HepG2 (cell line): ENCODE measurements at regions of chr7 and their contacts with region 1.

Region 1: GRCh38 chr7:100586266-100587025 is at the start of gene FBXO24:
- DNase-seq: peak; percentile 99
- ATAC-seq: peak; percentile 91
- H3K4me3 ChIP-seq: peak within 1 kb of the TSS; percentile 80 to 98 (median 86)
- H3K27ac ChIP-seq: peak within 1 kb of the TSS; percentile 81
- H3K4me1 ChIP-seq: peaks cover 56% of the 10 kb centered on the region
- H3K27me3 ChIP-seq: peaks cover 0 to 7% of the 10 kb centered on the region in 2 experiments; a peak in 3 of 5 replicates
- CTCF ChIP-seq: no peak
- EP300 ChIP-seq: no peak
- POLR2A ChIP-seq: peak in 1 of 2 experiments; percentile 80; a peak in 2 of 4 replicates
- RAD21 ChIP-seq: no peak
- total RNA-seq, gene FBXO24: 0.13 and 0.20 TPM in 2 replicates

Region 2: DNA sequence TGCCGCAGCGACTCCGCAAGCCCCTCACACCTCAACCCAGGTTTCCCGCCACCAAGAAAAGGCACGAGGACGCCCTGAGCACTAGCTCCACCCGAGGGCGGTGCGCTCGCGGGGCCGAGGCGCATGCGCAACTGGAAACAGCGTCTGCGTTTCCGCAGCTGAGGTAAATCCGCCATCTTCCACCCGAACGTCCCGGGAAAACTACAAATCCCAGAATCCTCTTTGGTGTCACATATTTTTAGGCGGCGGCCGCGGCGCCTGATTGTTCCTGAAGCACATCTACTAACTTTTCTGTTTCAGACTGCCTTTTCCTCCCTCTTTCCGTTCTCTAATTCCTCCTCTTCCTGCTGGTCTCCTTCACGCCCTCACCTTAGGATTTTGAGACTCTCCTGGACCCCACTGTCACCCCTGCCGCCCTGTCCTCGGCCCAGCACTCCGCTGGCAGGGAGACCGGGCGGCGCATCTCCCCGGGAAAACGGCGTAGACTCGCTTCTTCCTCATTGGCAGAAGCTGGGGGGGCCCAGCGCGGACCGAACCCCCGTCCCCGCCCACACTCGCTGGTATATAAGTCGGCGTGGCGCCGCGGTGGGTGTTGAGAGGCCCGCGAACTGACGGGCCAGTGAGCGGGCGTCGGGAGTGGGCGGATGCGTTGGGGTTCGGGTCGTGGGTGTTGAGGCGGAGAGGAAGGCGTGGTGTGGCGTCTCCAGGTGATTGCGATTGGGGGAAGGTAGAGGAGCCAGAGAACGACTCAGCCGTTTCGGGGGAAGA is 158.1 kb before region 1 on chr7 and contains the start of gene ZCWPW1:
- CTCF ChIA-PET with region 1: no interaction called
- POLR2A ChIA-PET with region 1: interaction called, 14 read pairs
- in situ Hi-C with region 1: no loop called
- intact Hi-C with region 1: no loop called
- DNase-seq: peak; percentile 91
- ATAC-seq: peak; percentile 67
- H3K4me3 ChIP-seq: peak within 1 kb of the TSS; percentile 75 to 87 (median 83)
- H3K27ac ChIP-seq: peak within 1 kb of the TSS; percentile 98
- H3K4me1 ChIP-seq: peaks cover 37% of the 10 kb centered on the region
- H3K27me3 ChIP-seq: no peaks in the 10 kb centered on the region; a peak in 1 of 5 replicates
- CTCF ChIP-seq: peak; percentile 25
- EP300 ChIP-seq: no peak; a peak in 1 of 4 replicates
- POLR2A ChIP-seq: peak in 1 of 2 experiments; percentile 98; a peak in 2 of 4 replicates
- RAD21 ChIP-seq: peak; percentile 15; the same call in 1 of the 2 replicates
- total RNA-seq, gene ZCWPW1: 2.5 and 2.6 TPM in 2 replicates

Region 3: GRCh38 chr7:100538654-100539435 is 47.6 kb before region 1 on chr7 and contains the start of gene AGFG2:
- CTCF ChIA-PET with region 1: no interaction called
- POLR2A ChIA-PET with region 1: interaction called, 17 read pairs
- in situ Hi-C with region 1: no loop called
- intact Hi-C with region 1: no loop called
- DNase-seq: peak; percentile 99
- ATAC-seq: peak; percentile 94
- H3K4me3 ChIP-seq: peak within 1 kb of the TSS; percentile 93 to 98 (median 96)
- H3K27ac ChIP-seq: peak within 1 kb of the TSS; percentile 96
- H3K4me1 ChIP-seq: peaks cover 55% of the 10 kb centered on the region
- H3K27me3 ChIP-seq: no peaks in the 10 kb centered on the region; a peak in 1 of 5 replicates
- CTCF ChIP-seq: no peak
- EP300 ChIP-seq: no peak
- POLR2A ChIP-seq: peak in 1 of 2 experiments; percentile 93; a peak in 3 of 4 replicates
- RAD21 ChIP-seq: peak; percentile 28; the same call in 1 of the 2 replicates
- total RNA-seq, gene AGFG2: 117 and 132 TPM in 2 replicates

Region 4: GRCh38 chr7:100568896-100569844 is 17.3 kb before region 1 on chr7:
- CTCF ChIA-PET with region 1: interaction called, 4 read pairs
- POLR2A ChIA-PET with region 1: interaction called, 73 read pairs
- in situ Hi-C with region 1: no loop called
- intact Hi-C with region 1: no loop called
- DNase-seq: peak; percentile 91
- ATAC-seq: peak; percentile 37
- H3K4me3 ChIP-seq: peak overlapping the region; percentile 0 to 62 (median 31); a peak in 4 of 6 replicates
- H3K27ac ChIP-seq: peak overlapping the region; percentile 99
- H3K4me1 ChIP-seq: peaks cover 91% of the 10 kb centered on the region
- H3K27me3 ChIP-seq: no peaks in the 10 kb centered on the region
- CTCF ChIP-seq: peak; percentile 90
- EP300 ChIP-seq: 0 out of 4 replicates have a peak, but pooled peaks of 1 of the 2 experiments have one; percentile 30
- POLR2A ChIP-seq: peak in 1 of 2 experiments; percentile 53; a peak in 2 of 4 replicates
- RAD21 ChIP-seq: peak; percentile 54; the same call in 1 of the 2 replicates

Region 5: DNA sequence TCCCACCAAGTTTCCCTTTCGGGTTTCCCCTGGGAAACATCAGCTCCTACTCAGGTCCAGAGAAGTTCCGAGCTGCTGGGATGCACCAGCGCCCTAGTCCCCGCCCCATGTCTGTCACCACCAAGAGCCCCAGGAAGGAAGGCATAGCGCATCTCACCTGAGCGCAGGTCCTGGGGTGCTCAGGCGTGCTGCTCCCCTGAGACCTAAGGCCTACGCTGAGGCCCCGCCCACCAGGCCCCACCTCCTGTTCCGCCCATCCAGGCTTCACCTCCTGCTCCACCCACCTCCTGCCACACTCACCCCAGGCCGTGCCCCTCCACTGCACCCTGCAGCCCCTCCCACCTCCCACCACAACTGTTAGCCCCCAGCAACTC is 56.1 kb after region 1 on chr7:
- CTCF ChIA-PET with region 1: no interaction called
- POLR2A ChIA-PET with region 1: interaction called, 11 read pairs
- in situ Hi-C with region 1: no loop called
- intact Hi-C with region 1: no loop called
- DNase-seq: peak; percentile 38
- ATAC-seq: peak; percentile 83
- H3K4me3 ChIP-seq: peak overlapping the region; percentile 57 to 84 (median 64)
- H3K27ac ChIP-seq: peak overlapping the region; percentile 88
- H3K4me1 ChIP-seq: peaks cover 41% of the 10 kb centered on the region
- H3K27me3 ChIP-seq: peaks cover 5 to 17% of the 10 kb centered on the region in 2 experiments; a peak in 4 of 5 replicates
- CTCF ChIP-seq: no peak
- EP300 ChIP-seq: no peak
- POLR2A ChIP-seq: peak; percentile 23 to 93; a peak in 2 of 4 replicates
- RAD21 ChIP-seq: no peak

Region 6: GRCh38 chr7:100705753-100706671 is 119.6 kb after region 1 on chr7 and contains the start of gene POP7:
- CTCF ChIA-PET with region 1: no interaction called
- POLR2A ChIA-PET with region 1: interaction called, 12 read pairs
- in situ Hi-C with region 1: no loop called
- intact Hi-C with region 1: no loop called
- DNase-seq: peak; percentile 94
- ATAC-seq: peak; percentile 93
- H3K4me3 ChIP-seq: peak within 1 kb of the TSS; percentile 93 to 98 (median 98)
- H3K27ac ChIP-seq: peak within 1 kb of the TSS; percentile 84
- H3K4me1 ChIP-seq: peaks cover 30% of the 10 kb centered on the region
- H3K27me3 ChIP-seq: no peaks in the 10 kb centered on the region
- CTCF ChIP-seq: no peak
- EP300 ChIP-seq: no peak
- POLR2A ChIP-seq: peak; percentile 51 to 89
- RAD21 ChIP-seq: no peak
- total RNA-seq, gene POP7: 91.1 and 91.5 TPM in 2 replicates